Naive thymus-derived CD8-positive, alpha-beta T cell (primary cell): ENCODE measurements at regions of chr9 and their contacts with region 1.

Region 1: DNA sequence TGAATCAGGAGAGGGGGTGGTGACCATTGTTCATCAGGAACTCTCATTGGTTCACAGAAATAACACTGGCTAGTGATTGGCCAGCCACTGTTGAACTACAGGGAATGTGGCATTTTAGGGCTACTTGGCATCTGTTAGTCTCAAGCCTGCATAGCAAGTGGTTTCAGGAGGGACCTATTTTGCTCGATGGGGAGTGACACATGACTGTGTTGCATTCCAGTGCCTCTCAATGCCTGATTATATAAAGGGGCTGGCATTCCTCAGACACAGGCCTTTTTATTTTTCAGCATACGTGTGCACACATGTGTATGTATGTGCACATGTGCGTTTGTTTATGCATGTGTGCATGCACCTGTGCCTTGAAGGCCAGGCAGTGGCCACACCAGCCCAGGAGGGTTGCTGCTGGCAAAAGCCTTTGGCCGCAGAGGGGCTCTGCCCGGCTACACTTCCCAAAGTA is 23.2 kb downstream of the FGD3 start:
- DNase-seq: no peak
- ATAC-seq: no peak
- H3K4me3 Mint-ChIP-seq: peak overlapping the region; percentile 86 to 97 (median 92)
- H3K27ac Mint-ChIP-seq: peak overlapping the region; percentile 91 to 100 (median 98)
- H3K4me1 Mint-ChIP-seq: peaks cover 45 to 97% (median 85%) of the 10 kb centered on the region in 4 donors
- H3K27me3 Mint-ChIP-seq: no peaks in the 10 kb centered on the region

Region 2: DNA sequence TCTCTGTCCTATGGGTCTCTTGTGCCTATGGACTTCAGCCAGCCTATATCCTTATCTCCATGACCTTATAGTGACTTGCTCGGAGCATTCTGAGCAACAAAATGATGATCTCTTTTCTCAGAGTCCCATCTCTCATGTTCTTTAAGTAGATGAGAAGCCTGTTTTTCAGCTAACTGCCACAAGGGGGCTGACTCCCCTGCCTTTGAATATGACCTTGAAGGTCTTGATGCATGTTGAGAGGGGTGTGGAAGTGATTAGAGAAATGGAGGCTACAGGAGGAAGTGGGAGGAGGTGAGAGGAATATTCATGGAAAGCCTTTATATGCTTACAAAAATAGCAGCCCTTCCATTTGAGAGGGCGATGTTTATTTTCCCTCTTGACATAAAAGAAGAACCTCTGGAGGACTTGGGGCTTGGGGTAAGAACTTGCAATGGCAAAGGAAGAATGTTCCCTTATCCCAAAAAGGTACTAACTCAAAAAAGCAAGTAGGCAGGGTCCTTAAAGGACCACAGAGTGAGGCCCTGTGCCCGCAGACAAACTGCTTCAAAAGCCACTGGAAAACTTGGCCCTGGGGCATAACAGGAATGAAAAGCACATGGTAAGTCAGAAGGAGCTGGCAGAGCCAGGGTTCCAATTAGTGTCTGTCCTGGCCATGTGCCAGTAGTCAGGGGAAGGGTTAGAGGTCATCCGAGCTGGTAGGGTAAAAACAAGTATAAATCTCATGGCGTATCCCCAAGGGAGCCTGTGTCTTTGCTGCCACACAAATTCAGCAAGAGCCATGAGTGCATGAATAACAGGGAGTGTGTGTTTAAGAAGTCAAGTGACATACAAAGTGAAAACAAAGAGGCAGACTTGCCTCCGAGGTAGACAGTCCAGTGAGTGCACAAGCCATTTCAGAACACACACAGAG is 15.9 kb after region 1 on chr9:
- POLR2A ChIA-PET with region 1: interaction called, 223 read pairs
- DNase-seq: peak in 8 of 10 donors; percentile 37 to 79 (median 62)
- ATAC-seq: peak; percentile 51 to 70
- H3K4me3 Mint-ChIP-seq: peak overlapping the region in 8 of 10 donors; percentile 30 to 66 (median 57)
- H3K27ac Mint-ChIP-seq: peak overlapping the region; percentile 54 to 94 (median 90)
- H3K4me1 Mint-ChIP-seq: peaks cover 53 to 89% (median 85%) of the 10 kb centered on the region in 4 donors
- H3K27me3 Mint-ChIP-seq: no peaks in the 10 kb centered on the region